ENCODE measurements at regions of chr16 and their contacts with region 1.

Region 1: GRCh38 chr16:84484579-84485254 is 19.7 kb downstream of the MEAK7 start:
- DNase-seq: peak; percentile 77
- H3K4me3 ChIP-seq: no peak overlapping the region; a peak in 1 of 4 replicates
- H3K27ac ChIP-seq: no peak overlapping the region
- H3K4me1 ChIP-seq: no peaks in the 10 kb centered on the region; a peak in 1 of 4 replicates
- H3K27me3 ChIP-seq: no peaks in the 10 kb centered on the region
- CTCF ChIP-seq: peak; percentile 79
- EP300 ChIP-seq: no peak
- RAD21 ChIP-seq: peak; percentile 94

Region 2: DNA sequence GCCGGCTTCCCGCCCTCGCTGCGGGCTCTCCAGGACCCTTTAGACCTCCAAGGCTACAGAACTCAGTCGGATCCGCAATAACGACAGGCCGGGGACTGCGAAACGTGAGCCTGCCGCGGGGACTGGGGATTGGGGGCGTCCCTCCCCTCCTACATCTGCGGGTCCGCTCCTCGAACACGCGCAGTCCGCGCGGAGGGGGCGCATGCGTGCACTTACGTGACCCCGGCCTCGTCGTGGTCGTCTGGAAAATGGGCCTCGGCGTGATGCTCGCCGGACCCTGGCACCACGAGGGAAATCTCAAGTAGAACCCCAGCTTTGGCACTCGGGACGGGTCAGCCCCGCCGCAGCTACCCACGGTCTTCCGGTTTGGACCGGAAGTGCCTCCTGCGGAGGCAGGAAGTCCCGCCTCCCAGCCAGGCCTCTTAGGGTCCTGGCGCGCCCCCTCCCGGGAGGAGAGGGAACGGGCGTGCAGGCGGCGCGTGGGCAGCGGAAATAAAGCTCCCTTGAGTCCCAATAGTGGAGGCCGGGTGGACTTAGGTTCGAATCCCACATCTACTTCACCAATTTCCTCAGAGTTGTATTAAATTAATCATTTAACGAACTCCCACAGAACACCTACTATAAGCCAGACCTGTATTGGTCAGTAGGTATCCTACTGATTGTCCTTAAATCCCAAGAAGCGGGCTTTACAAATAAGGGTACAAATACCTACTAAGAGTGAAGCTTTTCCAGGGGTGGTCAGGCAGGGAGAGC is 297.9 kb before region 1 on chr16 and contains the start of gene TAF1C:
- CTCF ChIA-PET with region 1: interaction called, 13 read pairs
- POLR2A ChIA-PET with region 1: no interaction called
- DNase-seq: peak; percentile 99
- H3K4me3 ChIP-seq: peak within 1 kb of the TSS; percentile 96 to 100
- H3K27ac ChIP-seq: peak within 1 kb of the TSS; percentile 51 to 64; a peak in 3 of 4 replicates
- H3K4me1 ChIP-seq: peaks cover 0 to 11% of the 10 kb centered on the region in 2 experiments; a peak in 1 of 4 replicates
- H3K27me3 ChIP-seq: no peaks in the 10 kb centered on the region
- CTCF ChIP-seq: peak; percentile 91
- EP300 ChIP-seq: no peak; a peak in 1 of 4 replicates
- RAD21 ChIP-seq: peak; percentile 67
- polyA plus RNA-seq, gene TAF1C: 49.3 and 56.1 TPM in 2 replicates

Region 3: DNA sequence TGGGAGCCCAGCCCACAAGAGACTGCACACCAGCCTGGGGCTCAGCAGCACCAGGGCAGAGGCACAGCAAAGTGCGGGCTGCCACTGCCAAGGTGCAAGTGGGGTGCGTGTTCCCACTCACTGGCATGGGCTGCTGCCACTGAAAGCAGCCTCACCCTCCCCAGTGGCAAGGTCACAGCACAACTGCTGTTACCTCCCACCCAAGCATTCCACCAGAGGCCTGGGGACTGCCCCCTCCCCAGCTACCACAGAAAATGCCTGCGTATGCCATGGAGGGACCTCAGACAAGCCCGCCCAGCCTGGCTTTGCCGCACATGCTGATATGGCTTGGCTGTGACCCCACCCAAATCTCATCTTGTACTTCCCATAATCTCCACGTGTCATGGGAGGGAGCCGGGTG is 13.4 kb before region 1 on chr16:
- CTCF ChIA-PET with region 1: interaction called, 12 read pairs
- POLR2A ChIA-PET with region 1: no interaction called
- DNase-seq: no peak
- H3K4me3 ChIP-seq: no peak overlapping the region
- H3K27ac ChIP-seq: no peak overlapping the region
- H3K4me1 ChIP-seq: no peaks in the 10 kb centered on the region
- H3K27me3 ChIP-seq: no peaks in the 10 kb centered on the region
- CTCF ChIP-seq: no peak
- EP300 ChIP-seq: no peak
- RAD21 ChIP-seq: no peak

Region 4: DNA sequence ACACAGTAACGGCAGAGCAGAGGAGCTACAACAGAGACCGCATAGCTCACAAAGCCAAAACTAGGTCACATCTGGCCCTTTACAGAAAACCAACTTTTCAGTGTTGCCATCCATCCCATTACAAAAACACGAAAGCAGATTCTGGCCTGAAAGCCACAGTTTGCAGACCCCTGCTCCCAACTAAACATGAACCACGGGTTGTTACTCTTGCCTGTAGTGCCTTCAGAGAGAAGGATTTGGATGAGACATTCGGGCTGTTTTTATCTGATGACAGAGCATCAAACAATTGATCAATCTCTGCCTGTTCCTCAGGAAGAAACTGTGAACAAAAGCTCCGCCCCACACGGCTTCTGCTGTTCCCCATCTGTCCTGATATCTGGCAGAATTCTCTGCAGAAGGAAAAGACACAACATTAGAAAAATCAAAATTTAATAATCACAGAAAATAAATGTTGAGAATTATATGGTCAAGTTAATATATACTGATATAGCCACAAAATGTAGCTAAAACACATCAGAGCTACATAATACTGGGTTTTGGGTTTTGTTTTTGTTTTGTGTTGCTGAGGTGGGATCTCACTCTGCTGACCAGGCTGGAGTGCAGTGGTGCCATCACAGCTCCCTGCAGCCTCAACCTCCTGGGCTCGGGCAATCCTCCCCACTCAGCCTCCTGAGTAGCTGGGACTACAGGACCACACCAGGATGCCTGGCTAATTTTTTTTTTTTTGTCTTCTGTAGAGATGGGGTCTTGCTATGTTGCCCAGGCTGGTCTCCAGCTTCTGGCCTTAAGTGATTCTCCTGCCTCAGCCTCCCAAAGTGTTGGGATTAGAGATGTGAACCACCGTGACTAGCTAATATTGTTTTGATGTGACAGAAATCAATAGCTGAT is 13.2 kb after region 1 on chr16:
- CTCF ChIA-PET with region 1: interaction called, 27 read pairs
- POLR2A ChIA-PET with region 1: no interaction called
- DNase-seq: no peak
- H3K4me3 ChIP-seq: no peak overlapping the region
- H3K27ac ChIP-seq: no peak overlapping the region; a peak in 1 of 4 replicates
- H3K4me1 ChIP-seq: no peaks in the 10 kb centered on the region; a peak in 1 of 4 replicates
- H3K27me3 ChIP-seq: no peaks in the 10 kb centered on the region
- CTCF ChIP-seq: no peak
- EP300 ChIP-seq: no peak
- RAD21 ChIP-seq: no peak

Measured in SK-N-SH (cell line).